ENCODE measurements at regions of chr5 and their contacts with region 1.

Region 1: GRCh38 chr5:56175488-56175887 is 57.6 kb downstream of the ANKRD55 start:
- DNase-seq: no peak

Region 2: DNA sequence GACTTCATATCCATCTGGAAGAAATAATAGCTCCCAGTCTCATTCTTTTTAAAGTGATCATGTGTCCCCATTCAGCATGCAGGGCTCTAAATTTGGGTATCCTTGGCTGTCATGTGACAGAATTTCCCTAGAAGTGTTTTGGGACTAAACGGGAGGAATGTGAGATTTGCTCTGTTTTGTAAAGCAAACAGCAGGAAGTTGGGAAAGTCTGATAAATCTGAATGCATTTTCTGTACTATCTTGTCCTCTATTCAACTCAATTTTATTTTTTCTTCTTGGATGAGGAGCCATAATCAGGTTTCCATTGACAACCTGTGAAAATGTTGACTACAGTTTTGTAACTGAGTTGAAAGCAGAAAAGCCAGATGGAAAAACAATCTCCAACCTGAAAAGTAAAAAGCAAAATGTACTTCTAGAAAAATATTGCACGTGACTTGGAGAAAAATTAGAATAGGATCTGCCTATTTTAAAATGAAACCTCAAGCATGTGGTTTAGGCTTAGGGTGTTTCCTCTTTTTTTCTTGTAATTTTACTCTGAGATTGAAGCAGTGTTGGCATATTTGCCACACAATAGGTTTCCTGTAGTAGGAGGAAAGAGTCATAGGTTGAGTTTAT is 104.5 kb before region 1 on chr5:
- intact Hi-C with region 1: loop called (anchors 5 kb)
- DNase-seq: no peak

Measured in cardiac septum (tissue), 1 donor.